H1 (cell line): ENCODE measurements at regions of chr5 and their contacts with region 1.

Region 1: DNA sequence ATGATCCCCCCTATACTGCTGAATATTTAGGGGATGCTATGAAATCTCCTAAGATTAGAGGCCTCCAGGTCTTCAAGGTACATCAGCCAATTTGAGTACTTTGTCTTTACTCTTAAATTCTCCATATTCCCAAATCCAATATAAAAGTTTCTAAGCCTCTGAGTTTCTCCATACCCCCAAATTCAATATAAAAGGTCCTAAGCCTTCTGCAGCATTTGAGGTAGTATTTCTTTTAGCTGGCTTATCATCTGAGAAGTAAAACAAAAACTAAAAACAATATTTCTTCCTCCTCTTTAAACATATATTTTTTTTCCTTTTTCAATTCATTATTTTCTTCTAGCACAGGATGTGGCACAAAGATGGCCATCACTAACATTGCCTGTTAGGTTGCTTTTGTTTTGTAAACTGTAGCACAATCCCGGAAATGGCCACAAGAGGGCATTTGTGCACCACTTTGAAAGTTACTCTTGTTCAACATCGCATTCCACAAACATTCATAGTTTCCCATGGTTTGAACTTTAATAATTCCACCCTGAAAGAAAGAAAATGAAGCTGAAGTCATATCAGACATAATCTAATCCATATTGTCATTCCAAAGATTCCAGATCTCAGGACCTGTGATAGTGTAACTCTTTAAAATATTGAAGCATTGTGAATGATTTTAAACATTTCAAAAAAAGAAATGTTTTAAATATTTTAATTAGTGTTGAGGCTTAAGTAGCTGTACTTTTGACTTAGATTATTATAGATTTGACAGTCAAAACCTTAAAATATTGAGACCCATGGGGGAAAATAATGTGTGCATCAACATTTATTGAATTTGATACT is 21.0 kb upstream of the SCGB3A2 start:
- DNase-seq: peak; percentile 50 to 76
- H3K4me3 ChIP-seq: no peak overlapping the region
- H3K27ac ChIP-seq: no peak overlapping the region
- H3K4me1 ChIP-seq: peaks cover 2 to 16% (median 13%) of the 10 kb centered on the region in 4 experiments; a peak in 5 of 7 replicates
- H3K27me3 ChIP-seq: no peaks in the 10 kb centered on the region
- CTCF ChIP-seq: peak in 2 of 3 experiments; percentile 61 to 83; a peak in 3 of 4 replicates
- EP300 ChIP-seq: no peak
- POLR2A ChIP-seq: no peak; a peak in 1 of 3 replicates
- RAD21 ChIP-seq: peak; percentile 85 to 86

Region 2: DNA sequence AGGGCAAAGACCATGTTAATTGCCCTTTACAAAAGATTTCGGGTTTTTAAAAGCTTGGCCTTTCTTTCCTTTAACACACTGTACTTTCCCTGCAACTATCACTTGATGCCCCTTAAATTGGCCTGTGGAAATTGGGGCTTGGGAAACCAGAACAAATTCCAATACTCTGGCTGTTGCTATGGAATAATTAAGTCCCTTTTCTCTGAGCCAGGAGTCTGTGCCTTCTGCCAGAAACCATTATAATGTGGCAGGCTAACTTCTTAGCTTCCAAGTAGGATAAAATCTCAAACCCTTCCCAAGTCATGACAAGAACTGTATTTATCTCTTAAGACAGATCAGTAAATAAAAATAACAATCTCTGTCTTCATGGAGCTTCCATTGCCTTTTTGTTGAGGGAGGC is 25.0 kb before region 1 on chr5:
- CTCF ChIA-PET with region 1: interaction called, 5 read pairs
- POLR2A ChIA-PET with region 1: interaction called, 16 read pairs
- DNase-seq: no peak
- H3K4me3 ChIP-seq: no peak overlapping the region
- H3K27ac ChIP-seq: no peak overlapping the region
- H3K4me1 ChIP-seq: no peaks in the 10 kb centered on the region
- H3K27me3 ChIP-seq: no peaks in the 10 kb centered on the region
- CTCF ChIP-seq: no peak
- EP300 ChIP-seq: no peak
- POLR2A ChIP-seq: no peak
- RAD21 ChIP-seq: no peak

Region 3: DNA sequence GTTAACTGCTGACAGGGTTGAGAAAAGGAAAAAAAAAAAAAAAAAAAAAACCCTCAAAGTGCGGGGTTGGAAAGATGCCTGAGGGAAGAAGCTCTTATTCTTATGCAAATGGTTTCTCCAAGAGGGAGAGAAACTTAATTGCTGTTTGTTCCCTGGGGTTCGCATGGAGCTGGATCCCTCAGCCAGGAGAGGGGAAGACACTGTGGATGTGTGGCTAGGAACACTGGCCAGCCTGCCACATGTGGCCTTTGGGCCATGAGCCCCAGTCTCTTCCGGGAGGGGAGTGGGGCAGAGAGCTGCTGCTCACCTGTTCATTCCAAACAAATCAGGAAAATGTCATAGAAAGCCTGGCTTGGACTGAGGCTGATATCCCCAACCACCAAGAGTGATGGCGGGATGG is 11.6 kb after region 1 on chr5:
- CTCF ChIA-PET with region 1: interaction called, 16 read pairs
- POLR2A ChIA-PET with region 1: interaction called, 730 read pairs
- DNase-seq: peak; percentile 43 to 75
- H3K4me3 ChIP-seq: peak overlapping the region; percentile 11 to 53 (median 20); a peak in 6 of 8 replicates
- H3K27ac ChIP-seq: peak overlapping the region; percentile 96
- H3K4me1 ChIP-seq: peaks cover 3 to 14% (median 7%) of the 10 kb centered on the region in 4 experiments
- H3K27me3 ChIP-seq: no peaks in the 10 kb centered on the region
- CTCF ChIP-seq: no peak
- EP300 ChIP-seq: no peak
- POLR2A ChIP-seq: peak in 1 of 2 experiments; percentile 87; a peak in 2 of 3 replicates
- RAD21 ChIP-seq: no peak

Region 4: DNA sequence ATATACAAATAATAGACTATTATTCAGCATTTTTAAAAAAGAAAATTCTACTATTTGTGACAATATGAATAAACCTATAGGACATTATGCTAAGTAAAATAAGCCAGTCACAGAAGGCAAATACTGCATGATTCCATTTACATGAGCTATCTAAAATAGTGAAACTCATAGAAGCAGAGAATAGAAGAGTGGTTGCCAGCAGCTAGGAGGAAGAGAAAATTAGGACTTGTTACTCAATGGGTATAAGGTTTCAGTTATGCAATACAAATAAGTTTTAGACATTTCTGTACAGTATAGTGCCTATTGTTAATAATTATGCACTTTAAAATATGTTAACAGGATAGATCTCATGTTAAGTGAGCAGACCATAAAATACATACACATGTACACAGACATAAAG is 132.5 kb after region 1 on chr5:
- CTCF ChIA-PET with region 1: no interaction called
- POLR2A ChIA-PET with region 1: no interaction called
- DNase-seq: no peak
- H3K4me3 ChIP-seq: no peak overlapping the region
- H3K27ac ChIP-seq: no peak overlapping the region
- H3K4me1 ChIP-seq: no peaks in the 10 kb centered on the region
- H3K27me3 ChIP-seq: no peaks in the 10 kb centered on the region
- CTCF ChIP-seq: no peak
- EP300 ChIP-seq: no peak
- POLR2A ChIP-seq: no peak
- RAD21 ChIP-seq: no peak